Mammary epithelial cell (primary cell): ENCODE measurements at regions of chr1 and their contacts with region 1.

Region 1: GRCh38 chr1:76949503-76949902 is 82.2 kb downstream of the ST6GALNAC5 start:
- DNase-seq: peak; percentile 78
- H3K4me3 ChIP-seq: no peak overlapping the region
- H3K27ac ChIP-seq: peak overlapping the region; percentile 7
- H3K4me1 ChIP-seq: peaks cover 24% of the 10 kb centered on the region
- H3K27me3 ChIP-seq: no peaks in the 10 kb centered on the region
- CTCF ChIP-seq: no peak

Region 2: GRCh38 chr1:76871355-76871974 is 78.0 kb before region 1 on chr1:
- CTCF ChIA-PET with region 1: no interaction called
- dilution Hi-C with region 1: loop called (anchors 5 kb)
- in situ Hi-C with region 1: no loop called
- intact Hi-C with region 1: no loop called
- DNase-seq: no peak
- H3K4me3 ChIP-seq: no peak overlapping the region
- H3K27ac ChIP-seq: no peak overlapping the region
- H3K4me1 ChIP-seq: peaks cover 18% of the 10 kb centered on the region
- H3K27me3 ChIP-seq: peaks cover 12% of the 10 kb centered on the region
- CTCF ChIP-seq: no peak

Region 3: DNA sequence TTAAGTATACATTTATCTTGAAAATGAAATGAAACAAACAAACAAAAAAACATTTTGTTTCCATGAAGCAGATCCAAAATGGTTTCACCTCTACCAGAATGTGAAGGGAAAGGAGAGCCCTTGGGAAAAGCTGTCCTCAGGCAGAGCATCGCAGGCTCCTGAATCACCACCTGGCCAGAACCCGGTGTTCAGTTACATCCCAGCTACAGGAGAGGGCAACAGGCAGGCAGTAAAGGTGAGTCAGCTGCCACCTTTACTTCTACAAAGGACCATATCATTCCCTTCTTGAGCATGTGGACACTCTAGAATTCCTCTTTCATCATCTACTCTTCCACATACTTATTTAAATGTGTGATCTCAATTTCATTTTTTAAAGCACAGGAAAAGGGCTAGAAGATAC is 118.5 kb after region 1 on chr1:
- CTCF ChIA-PET with region 1: no interaction called
- dilution Hi-C with region 1: no loop called
- in situ Hi-C with region 1: no loop called
- intact Hi-C with region 1: no loop called
- DNase-seq: peak; percentile 76
- H3K4me3 ChIP-seq: no peak overlapping the region
- H3K27ac ChIP-seq: no peak overlapping the region
- H3K4me1 ChIP-seq: peaks cover 7% of the 10 kb centered on the region
- H3K27me3 ChIP-seq: no peaks in the 10 kb centered on the region
- CTCF ChIP-seq: peak; percentile 10 to 17